ENCODE measurements at regions of chr15 and their contacts with region 1.

Region 1: DNA sequence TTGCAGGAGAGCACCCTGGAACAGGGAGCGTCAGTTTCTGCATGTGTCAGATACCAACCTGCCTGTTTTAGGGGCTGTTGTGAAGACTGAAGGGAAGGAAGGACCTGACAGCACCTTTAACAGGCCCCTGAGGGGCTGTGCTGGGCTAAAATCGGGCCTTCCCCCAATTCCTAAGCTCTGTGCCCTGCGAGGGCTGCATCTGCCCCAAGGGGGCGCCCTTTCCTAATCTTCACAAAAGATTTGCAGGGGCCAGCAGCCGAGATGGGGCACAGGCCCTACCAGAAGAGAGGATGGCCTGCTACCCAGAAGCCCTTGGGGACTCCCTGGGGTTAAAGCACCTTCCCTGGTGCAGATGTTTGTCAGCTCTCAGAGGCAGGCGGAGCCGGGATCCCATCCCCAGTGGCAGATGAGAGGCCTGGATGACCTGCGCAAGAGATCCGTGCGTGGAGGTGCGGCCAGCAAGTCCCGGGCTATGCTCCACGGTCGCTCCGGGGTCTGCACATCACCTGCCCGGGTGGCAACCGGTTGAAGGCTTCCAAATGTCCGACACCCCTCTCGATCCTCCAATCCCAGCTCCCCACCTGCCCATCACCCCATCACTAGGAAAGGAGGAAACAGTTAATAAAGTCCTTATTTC is 53.6 kb downstream of the RHCG start:
- DNase-seq: no peak
- H3K4me3 ChIP-seq: no peak overlapping the region
- H3K27ac ChIP-seq: no peak overlapping the region
- H3K4me1 ChIP-seq: no peaks in the 10 kb centered on the region
- H3K27me3 ChIP-seq: no peaks in the 10 kb centered on the region
- CTCF ChIP-seq: peak; percentile 74 to 82

Region 2: GRCh38 chr15:89472785-89473256 is 30.0 kb after region 1 on chr15:
- CTCF ChIA-PET with region 1: no interaction called
- dilution Hi-C with region 1: no loop called
- in situ Hi-C with region 1: no loop called
- intact Hi-C with region 1: loop called (anchors 1 kb)
- DNase-seq: peak; percentile 37
- H3K4me3 ChIP-seq: no peak overlapping the region
- H3K27ac ChIP-seq: no peak overlapping the region
- H3K4me1 ChIP-seq: peaks cover 8% of the 10 kb centered on the region
- H3K27me3 ChIP-seq: peaks cover 4% of the 10 kb centered on the region
- CTCF ChIP-seq: peak; percentile 80 to 92

Region 3: DNA sequence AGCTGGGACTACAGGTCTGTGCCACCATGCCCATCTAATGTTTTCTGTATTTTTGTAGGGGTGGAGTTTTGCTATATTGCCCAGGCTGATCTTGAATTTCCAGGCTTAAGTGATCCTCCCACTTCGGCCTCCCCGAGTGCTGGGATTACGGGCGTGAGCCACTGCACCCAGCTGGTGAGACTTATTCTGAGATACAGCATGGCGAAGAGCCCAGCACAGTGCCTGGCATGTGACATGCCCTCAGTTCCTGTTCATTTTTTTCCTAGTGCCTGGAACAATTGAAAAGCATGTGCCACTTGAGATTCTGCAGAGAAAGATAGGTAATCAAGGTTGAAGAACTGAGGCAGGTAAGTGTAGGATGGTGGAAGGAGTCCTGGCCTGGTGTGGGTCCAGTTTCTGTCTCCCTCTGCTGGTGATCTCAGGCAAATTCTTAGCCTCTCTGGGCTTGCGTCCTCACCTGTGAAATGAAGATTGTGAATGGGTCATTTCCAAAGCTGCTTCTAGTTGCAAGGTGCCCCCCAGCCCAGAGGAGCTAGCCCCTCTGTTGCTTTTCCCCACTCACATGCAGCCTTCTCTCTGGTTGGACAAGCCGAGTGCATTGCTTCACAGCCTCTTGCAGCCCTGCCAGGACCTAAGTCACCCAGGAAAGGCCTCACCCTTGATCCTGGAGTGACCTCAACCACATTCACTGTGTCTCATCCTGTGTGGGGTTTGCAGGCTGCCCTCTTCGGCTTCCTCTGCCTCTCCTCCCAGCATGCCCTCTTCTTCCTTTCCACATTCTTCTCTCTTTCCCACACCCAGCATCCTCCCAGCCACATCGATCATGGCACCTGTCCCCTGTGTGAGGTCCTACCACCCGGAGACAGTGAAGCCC is 57.8 kb after region 1 on chr15:
- CTCF ChIA-PET with region 1: no interaction called
- dilution Hi-C with region 1: no loop called
- in situ Hi-C with region 1: no loop called
- intact Hi-C with region 1: no loop called
- DNase-seq: no peak
- H3K4me3 ChIP-seq: no peak overlapping the region
- H3K27ac ChIP-seq: no peak overlapping the region
- H3K4me1 ChIP-seq: peaks cover 28% of the 10 kb centered on the region
- H3K27me3 ChIP-seq: no peaks in the 10 kb centered on the region
- CTCF ChIP-seq: peak; percentile 51 to 56

Measured in mammary epithelial cell (primary cell).